PC-9 (cell line): ENCODE measurements at regions of chr3 and their contacts with region 1.

Region 1: DNA sequence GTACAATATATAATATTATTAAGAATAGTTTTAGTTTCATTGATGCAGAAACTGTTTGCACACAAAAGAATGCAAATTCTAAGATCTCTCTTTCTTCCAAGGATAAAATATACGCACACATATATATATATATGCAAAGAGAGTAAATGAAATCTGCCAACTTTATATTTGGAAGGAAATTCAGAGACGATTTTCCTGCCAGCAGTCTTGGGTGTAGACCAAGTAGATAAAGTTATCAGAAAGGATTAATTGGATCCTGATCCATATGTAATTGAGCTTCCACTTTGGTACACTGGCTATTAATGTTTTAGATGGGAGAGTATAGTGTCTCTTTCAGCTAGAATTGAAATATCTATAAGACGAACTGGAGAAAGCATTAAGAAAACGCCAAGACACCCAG is 295.4 kb upstream of the IL12A start:
- DNase-seq: no peak
- H3K4me3 ChIP-seq: no peak overlapping the region
- H3K27ac ChIP-seq: no peak overlapping the region
- H3K4me1 ChIP-seq: no peaks in the 10 kb centered on the region
- H3K27me3 ChIP-seq: no peaks in the 10 kb centered on the region
- CTCF ChIP-seq: no peak

Region 2: GRCh38 chr3:159169828-159170227 is 523.4 kb before region 1 on chr3:
- CTCF ChIA-PET with region 1: interaction called, 16 read pairs
- POLR2A ChIA-PET with region 1: no interaction called
- intact Hi-C with region 1: no loop called
- DNase-seq: peak in 1 of 2 experiments; percentile 79
- H3K4me3 ChIP-seq: no peak overlapping the region
- H3K27ac ChIP-seq: peak overlapping the region; percentile 69
- H3K4me1 ChIP-seq: peaks cover 28% of the 10 kb centered on the region
- H3K27me3 ChIP-seq: no peaks in the 10 kb centered on the region
- CTCF ChIP-seq: no peak

Region 3: DNA sequence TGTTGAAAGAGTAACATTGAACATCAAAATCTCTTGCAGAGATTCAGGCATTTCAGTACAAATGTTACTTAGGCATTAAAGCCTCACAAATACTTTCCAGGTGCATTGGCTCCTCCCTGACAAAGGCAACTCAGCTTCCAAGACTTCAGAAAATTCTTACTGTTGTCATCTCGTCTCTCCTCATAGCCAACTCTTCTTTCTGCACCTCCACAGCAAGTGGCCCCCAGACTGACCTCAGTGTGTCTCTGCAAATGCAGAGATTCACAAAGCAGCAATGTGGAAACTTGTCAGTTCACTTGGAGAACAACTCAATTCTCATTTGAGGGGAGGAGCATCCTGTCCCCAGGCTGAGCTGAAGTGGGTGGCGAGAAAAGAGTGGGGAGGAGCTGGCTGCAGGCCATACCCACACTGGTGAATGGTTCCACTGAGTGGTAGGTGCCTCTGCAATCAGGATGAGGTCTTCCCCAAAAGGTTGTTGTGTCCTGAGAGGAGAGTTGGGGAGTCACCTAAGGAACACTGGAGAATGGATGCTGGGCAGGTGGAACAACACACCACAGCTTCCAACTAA is 46.7 kb after region 1 on chr3:
- CTCF ChIA-PET with region 1: no interaction called
- POLR2A ChIA-PET with region 1: interaction called, 13 read pairs
- intact Hi-C with region 1: no loop called
- DNase-seq: no peak
- H3K4me3 ChIP-seq: no peak overlapping the region
- H3K27ac ChIP-seq: no peak overlapping the region
- H3K4me1 ChIP-seq: no peaks in the 10 kb centered on the region
- H3K27me3 ChIP-seq: no peaks in the 10 kb centered on the region
- CTCF ChIP-seq: no peak